Ascending aorta (tissue), 2 donors: ENCODE measurements at regions of chr12 and their contacts with region 1.

Region 1: DNA sequence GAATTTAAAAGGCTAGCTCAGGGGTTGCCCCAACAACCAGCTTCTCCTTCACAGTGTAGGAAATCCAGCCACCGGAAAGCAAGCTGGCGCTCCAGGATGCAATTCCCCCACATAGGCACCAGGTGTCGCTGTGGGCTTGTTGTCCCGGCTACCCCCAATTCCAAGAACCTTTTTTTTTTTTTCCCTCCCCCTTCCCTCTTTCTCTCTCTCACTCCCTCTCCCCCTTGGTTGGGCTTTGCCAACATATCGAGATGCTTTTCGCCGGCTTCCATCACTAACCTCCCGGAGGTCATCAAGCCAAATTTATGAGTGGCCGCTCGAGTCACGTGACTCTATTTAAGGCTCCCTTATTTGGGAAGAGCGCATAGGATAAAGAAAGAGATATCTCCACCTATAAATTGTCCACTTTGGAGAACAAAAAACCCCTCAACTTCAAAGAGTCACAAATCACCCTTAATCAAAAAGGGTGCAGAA is at the start of gene HOXC5:
- DNase-seq: peak in 1 of 2 donors; percentile 85
- H3K4me3 ChIP-seq: peak within 1 kb of the TSS; percentile 47 to 68
- H3K27ac ChIP-seq: peak within 1 kb of the TSS in 1 of 2 donors; percentile 11
- H3K4me1 ChIP-seq: peaks cover 0 to 5% of the 10 kb centered on the region in 2 donors
- H3K27me3 ChIP-seq: peaks cover 3% of the 10 kb centered on the region
- CTCF ChIP-seq: peak; percentile 81 to 99 (median 97)
- total RNA-seq, gene HOXC5: not detected

Region 2: GRCh38 chr12:54005853-54006686 is 26.6 kb before region 1 on chr12:
- intact Hi-C with region 1: loop called (anchors 2 kb)
- DNase-seq: peak; percentile 31 to 94
- H3K4me3 ChIP-seq: peak overlapping the region in 1 of 2 donors; percentile 28
- H3K27ac ChIP-seq: no peak overlapping the region
- H3K4me1 ChIP-seq: peaks cover 0 to 11% of the 10 kb centered on the region in 2 donors
- H3K27me3 ChIP-seq: peaks cover 6% of the 10 kb centered on the region
- CTCF ChIP-seq: peak; percentile 93 to 96 (median 96)

Region 3: GRCh38 chr12:54017878-54018467 is 14.7 kb before region 1 on chr12:
- intact Hi-C with region 1: loop called (anchors 2 kb)
- DNase-seq: peak in 1 of 2 donors; percentile 95
- H3K4me3 ChIP-seq: peak overlapping the region; percentile 47 to 71
- H3K27ac ChIP-seq: peak overlapping the region; percentile 94 to 96
- H3K4me1 ChIP-seq: peaks cover 0 to 10% of the 10 kb centered on the region in 2 donors
- H3K27me3 ChIP-seq: no peaks in the 10 kb centered on the region
- CTCF ChIP-seq: no peak

Region 4: DNA sequence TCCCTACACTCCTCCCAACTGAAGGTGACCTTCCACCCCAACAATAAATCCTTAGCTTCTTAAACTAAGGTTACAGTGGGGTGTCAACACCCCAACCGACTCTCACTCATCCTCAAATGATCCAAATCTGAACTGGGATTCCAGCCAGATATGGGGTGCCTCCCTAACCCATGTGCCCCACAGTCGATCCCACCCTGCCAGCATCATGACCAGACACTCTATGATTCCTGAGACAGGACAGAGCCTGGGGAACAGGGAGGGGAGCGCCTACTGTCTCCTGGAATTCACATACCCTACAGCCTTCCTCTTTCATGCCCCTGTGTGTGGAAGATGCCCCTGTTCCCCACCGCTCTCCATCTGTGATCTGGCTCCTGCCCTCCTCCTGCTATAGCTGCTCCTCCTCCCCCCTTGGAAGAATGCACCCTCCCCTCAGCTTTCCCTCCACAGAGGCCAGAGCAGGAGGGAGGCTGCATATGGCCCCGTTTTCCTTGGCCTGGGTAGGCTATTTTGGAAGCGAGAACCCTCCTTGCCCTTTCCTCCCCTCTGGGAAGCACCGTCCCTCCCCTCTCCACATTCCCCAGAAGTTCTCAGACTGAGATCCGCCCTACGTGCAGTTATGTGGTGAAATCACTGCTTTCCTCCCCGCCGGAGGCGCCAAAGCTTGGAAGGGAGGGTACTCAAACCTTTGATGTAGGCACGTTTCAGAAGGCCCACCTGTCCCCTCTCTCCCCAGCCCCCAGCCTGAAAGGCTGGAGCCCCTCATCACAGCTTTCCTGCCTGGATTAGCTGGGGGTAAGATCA is 108.1 kb after region 1 on chr12:
- intact Hi-C with region 1: loop called (anchors 5 kb)
- DNase-seq: peak in 1 of 2 donors; percentile 87
- H3K4me3 ChIP-seq: peak overlapping the region in 1 of 2 donors; percentile 27
- H3K27ac ChIP-seq: peak overlapping the region; percentile 82 to 88
- H3K4me1 ChIP-seq: peaks cover 4 to 19% of the 10 kb centered on the region in 2 donors
- H3K27me3 ChIP-seq: no peaks in the 10 kb centered on the region
- CTCF ChIP-seq: no peak

Region 5: DNA sequence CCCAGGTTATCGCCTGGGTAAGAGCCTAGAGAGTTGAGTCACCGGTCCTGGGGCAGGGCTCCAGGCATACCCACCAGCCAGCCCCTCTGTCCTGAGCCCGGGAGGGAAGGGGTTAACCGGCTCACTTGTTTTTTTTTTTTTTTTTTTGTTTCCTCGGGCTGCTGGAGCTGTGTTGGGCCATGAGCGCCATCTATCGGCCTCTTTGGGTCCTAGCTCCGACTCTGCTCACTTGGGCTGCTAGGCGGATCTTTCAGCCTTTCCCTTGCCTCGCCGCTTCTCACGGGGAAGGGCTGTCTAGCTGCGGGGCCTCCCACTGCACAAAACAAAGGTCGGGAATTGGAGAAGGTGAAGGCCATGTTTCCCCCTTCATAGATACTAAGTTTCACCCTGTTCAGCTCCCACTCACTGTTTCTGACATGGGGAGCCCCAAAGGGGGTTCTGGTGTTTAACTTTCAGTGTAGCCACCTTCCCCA is 158.9 kb after region 1 on chr12:
- intact Hi-C with region 1: loop called (anchors 1 kb)
- DNase-seq: peak in 1 of 2 donors; percentile 88
- H3K4me3 ChIP-seq: no peak overlapping the region
- H3K27ac ChIP-seq: no peak overlapping the region
- H3K4me1 ChIP-seq: peaks cover 0 to 7% of the 10 kb centered on the region in 2 donors
- H3K27me3 ChIP-seq: no peaks in the 10 kb centered on the region
- CTCF ChIP-seq: peak; percentile 58 to 78 (median 66)